GM13976 (cell line): ENCODE measurements at regions of chrX and their contacts with region 1.

Region 1: DNA sequence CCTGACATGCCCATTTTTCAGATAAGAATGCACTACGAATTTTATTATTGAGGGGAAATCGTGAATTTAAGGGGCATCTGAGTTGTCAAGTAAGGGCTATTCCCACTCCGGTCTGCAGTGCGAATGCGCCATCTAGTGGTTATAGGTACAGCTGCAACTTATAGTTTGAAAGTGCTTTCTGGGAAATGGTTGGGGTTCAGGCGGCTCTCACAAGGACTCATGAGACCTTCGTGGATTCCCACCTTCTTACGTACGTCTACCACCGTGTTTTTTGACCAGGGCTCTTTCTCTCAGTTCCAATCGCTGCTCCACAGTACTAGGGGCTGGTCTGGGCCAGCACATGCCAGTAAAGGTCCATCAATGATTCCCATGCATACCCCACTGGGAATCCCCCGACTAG is 12.3 kb downstream of the MSL3 start:
- DNase-seq: peak; percentile 64
- CTCF ChIP-seq: peak; percentile 85

Region 2: DNA sequence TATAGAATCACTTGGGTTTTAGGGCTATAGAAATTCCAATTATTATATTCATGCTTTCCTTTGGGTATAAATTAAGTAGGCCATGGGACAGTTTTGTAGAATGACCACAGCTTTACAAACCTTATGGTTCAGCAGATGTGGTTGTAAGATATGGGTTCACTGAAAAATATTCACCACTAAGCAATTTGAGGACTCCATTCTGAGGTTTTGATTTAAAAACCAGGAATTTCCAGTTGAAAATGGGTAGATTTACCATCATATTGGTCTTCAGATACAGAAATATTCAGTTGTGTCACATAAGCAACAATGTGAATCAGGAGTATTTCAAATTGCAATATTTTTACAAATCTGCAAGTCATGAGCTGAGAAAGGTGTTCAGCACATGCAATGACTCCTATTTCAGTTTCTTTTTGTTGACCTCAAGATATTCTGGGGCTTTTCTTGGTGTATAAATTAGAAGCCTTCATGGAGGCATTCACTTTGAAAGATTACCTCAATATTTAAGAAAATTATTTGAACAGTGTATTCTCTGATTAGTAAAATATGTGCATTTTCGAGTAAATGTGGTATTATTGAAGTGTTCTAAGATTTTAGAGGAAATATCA is 877.6 kb before region 1 on chrX:
- in situ Hi-C with region 1: no loop called
- DNase-seq: no peak
- CTCF ChIP-seq: no peak

Region 3: DNA sequence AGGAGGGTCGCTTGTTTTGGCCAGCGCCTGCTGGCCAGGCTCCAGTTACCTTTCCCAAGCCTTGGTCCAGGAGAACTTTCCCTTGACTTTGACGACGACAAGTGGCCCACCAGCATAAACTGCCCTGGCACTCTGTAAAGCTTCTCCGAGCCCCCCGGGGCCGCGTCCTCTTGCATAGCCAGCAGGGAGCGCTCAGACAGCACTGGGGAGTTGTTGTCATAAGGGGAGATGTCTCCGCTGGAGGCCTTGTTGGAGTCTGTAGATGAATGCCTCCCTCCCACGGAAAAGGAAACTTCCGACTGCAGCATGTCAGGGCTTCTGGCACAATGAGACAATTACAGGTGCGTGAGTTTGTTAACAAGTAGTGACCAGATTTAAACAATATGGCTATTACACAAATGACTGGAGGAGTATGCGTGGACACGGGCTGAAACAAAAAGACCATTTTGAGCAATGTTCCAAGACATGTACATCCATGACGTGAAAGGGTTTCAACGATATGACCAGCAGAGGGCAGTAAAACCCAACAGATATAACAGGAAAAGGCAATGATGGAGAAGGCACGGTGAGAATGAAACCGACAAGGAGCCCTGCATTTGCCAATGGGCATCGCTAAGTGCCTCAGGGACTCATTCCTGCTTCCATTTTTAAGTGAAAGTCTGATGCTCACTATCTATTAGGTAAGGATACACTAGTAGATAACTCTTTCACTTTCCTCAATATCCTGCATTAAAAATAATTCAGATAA is 626.2 kb before region 1 on chrX:
- in situ Hi-C with region 1: loop called (anchors 10 kb)
- DNase-seq: peak; percentile 67
- CTCF ChIP-seq: peak; percentile 26

Region 4: DNA sequence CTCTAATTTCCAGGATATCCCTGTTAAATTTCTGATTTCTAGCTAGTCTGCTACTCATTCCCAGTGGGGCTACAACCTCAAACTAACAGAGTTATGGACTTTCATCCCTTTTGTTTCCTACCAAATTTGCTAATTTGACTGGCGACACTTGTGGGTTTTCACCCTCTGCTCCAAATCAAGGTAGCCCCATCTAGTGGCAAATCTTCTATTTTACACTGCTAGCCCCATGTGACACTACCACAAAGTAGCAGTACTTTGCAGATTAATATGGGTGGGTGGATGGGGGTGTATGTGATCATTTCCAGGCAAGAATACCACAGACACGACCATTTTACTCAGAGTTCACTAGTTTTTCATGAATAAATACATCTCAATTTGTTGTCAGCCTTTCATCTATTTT is 138.1 kb after region 1 on chrX:
- in situ Hi-C with region 1: loop called (anchors 10 kb)
- DNase-seq: peak; percentile 11
- CTCF ChIP-seq: no peak